Calu3 (cell line): ENCODE measurements at regions of chr12 and their contacts with region 1.

Region 1: DNA sequence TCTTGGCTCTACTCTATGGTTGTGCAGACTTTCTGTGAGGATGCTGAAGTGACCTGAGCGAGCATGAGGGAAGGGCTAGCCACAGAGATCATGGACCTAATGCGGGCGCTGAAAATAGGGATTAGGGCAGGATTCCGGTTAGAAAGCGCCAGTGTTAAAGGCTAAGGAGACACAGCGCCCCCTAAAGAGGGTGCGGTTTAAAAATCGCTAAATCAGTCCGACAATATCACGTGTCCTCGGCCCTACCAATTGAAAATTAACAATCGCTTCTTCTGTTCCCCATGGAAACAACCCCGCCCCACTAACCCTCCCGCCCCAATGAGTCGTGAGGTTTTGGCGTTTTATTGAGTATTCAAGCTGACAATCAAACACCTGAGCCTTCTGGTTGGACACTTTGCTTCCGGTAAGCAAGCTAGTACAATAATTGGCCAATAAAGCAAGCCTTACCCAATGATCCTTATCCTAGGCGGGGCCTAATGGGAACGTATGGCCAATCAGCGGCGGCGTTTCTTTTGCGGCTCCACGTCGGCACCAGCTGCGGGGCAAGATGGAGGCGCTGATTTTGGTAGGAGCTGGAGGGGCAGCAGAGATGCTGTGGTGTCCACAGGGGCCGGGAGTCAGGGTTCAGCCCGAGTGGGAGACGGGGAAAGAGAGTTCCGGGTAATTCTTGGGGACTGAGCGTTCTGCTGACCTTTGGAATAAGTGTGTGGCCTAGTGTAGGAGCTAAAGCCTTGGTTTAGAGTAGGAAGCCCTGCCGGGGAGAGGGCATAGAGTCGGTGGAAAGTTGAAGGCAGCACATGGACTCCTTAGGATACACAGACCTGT is at the start of gene COPZ1:
- DNase-seq: peak; percentile 95
- H3K4me3 Mint-ChIP-seq: peak within 1 kb of the TSS; percentile 97
- H3K27ac Mint-ChIP-seq: peak within 1 kb of the TSS; percentile 97
- H3K4me1 Mint-ChIP-seq: peaks cover 34% of the 10 kb centered on the region
- H3K27me3 Mint-ChIP-seq: no peaks in the 10 kb centered on the region
- CTCF ChIP-seq: peak; percentile 53
- total RNA-seq, gene COPZ1: 173 and 190 TPM in 2 replicates

Region 2: GRCh38 chr12:53746592-53747092 is 578.2 kb before region 1 on chr12:
- CTCF ChIA-PET with region 1: no interaction called
- intact Hi-C with region 1: no loop called
- DNase-seq: peak; percentile 95
- H3K4me3 Mint-ChIP-seq: no peak overlapping the region
- H3K27ac Mint-ChIP-seq: no peak overlapping the region
- H3K4me1 Mint-ChIP-seq: no peaks in the 10 kb centered on the region
- H3K27me3 Mint-ChIP-seq: no peaks in the 10 kb centered on the region
- CTCF ChIP-seq: peak; percentile 95

Region 3: GRCh38 chr12:54251667-54252284 is 73.1 kb before region 1 on chr12:
- CTCF ChIA-PET with region 1: interaction called, 12 read pairs
- intact Hi-C with region 1: no loop called
- DNase-seq: peak; percentile 41
- H3K4me3 Mint-ChIP-seq: no peak overlapping the region
- H3K27ac Mint-ChIP-seq: no peak overlapping the region
- H3K4me1 Mint-ChIP-seq: no peaks in the 10 kb centered on the region
- H3K27me3 Mint-ChIP-seq: no peaks in the 10 kb centered on the region
- CTCF ChIP-seq: peak; percentile 42

Region 4: DNA sequence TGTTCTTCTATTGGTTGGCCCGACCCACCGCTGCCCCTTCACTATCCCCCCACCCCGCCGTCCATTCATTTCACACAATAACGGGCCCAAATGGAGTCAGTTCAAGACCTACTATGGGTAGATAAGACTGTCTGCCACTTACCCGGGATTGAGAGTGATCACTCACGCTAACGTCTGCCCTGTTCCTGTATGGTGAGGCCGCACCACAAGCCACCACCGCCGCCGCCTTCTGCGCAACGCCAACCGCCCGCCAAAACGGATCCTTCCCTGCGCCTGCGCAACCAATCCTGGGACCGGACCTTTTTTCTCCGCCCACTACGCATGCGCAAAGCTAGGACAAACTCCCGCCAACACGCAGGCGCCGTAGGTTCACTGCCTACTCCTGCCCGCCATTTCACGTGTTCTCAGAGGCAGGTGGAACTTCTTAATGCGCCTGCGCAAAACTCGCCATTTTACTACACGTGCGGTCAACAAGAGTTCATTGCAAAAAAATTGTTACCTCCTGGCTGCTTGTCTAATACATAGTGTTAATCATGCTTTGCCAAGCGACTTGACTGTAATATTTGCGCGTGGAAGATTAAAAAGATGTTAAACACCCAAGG is 44.9 kb before region 1 on chr12 and contains the start of gene CBX5:
- CTCF ChIA-PET with region 1: interaction called, 21 read pairs
- intact Hi-C with region 1: loop called (anchors 5 kb)
- DNase-seq: peak; percentile 99
- H3K4me3 Mint-ChIP-seq: no peak within 1 kb of the TSS
- H3K27ac Mint-ChIP-seq: no peak within 1 kb of the TSS
- H3K4me1 Mint-ChIP-seq: peaks cover 24% of the 10 kb centered on the region
- H3K27me3 Mint-ChIP-seq: no peaks in the 10 kb centered on the region
- CTCF ChIP-seq: no peak
- total RNA-seq, gene CBX5: 128 and 173 TPM in 2 replicates

Region 5: GRCh38 chr12:54306925-54307741 is 17.7 kb before region 1 on chr12:
- CTCF ChIA-PET with region 1: interaction called, 22 read pairs
- intact Hi-C with region 1: no loop called
- DNase-seq: peak; percentile 98
- H3K4me3 Mint-ChIP-seq: no peak overlapping the region
- H3K27ac Mint-ChIP-seq: no peak overlapping the region
- H3K4me1 Mint-ChIP-seq: peaks cover 40% of the 10 kb centered on the region
- H3K27me3 Mint-ChIP-seq: no peaks in the 10 kb centered on the region
- CTCF ChIP-seq: no peak

Region 6: GRCh38 chr12:54359033-54359761 is 34.4 kb after region 1 on chr12:
- CTCF ChIA-PET with region 1: interaction called, 13 read pairs
- intact Hi-C with region 1: loop called (anchors 2 kb)
- DNase-seq: peak; percentile 96
- H3K4me3 Mint-ChIP-seq: no peak overlapping the region
- H3K27ac Mint-ChIP-seq: no peak overlapping the region
- H3K4me1 Mint-ChIP-seq: peaks cover 8% of the 10 kb centered on the region
- H3K27me3 Mint-ChIP-seq: peaks cover 17% of the 10 kb centered on the region
- CTCF ChIP-seq: no peak